Naive thymus-derived CD4-positive, alpha-beta T cell (primary cell): ENCODE measurements at regions of chr3 and their contacts with region 1.

Region 1: DNA sequence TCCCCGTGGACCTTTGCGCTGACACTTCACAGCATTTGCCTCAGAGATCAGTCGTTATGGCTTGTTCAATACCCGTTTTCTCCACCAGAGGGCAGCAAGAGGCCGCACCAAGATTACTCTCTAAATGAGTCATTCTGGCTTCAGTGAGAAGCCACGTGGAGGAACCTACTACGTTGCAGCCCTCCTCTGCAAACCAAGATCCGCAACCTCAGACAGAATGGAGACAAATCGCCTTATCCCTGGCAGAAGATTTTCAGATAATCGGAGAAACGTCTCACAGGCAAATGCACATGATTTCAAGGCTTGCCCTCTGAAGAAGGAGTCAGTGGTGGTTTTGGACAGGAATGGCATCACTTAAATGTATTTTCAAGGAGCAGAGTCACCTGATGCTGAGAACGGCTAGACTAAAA is 60.5 kb downstream of the GTPBP8 start:
- DNase-seq: peak; percentile 65 to 86 (median 77)
- ATAC-seq: peak; percentile 99
- H3K4me3 ChIP-seq: no peak overlapping the region
- H3K4me3 Mint-ChIP-seq: no peak overlapping the region
- H3K27ac ChIP-seq: no peak overlapping the region
- H3K27ac Mint-ChIP-seq: no peak overlapping the region
- H3K4me1 ChIP-seq: peaks cover 0 to 4% of the 10 kb centered on the region in 2 donors
- H3K4me1 Mint-ChIP-seq: peaks cover 0 to 18% (median 14%) of the 10 kb centered on the region in 7 donors
- H3K27me3 ChIP-seq: no peaks in the 10 kb centered on the region
- H3K27me3 Mint-ChIP-seq: no peaks in the 10 kb centered on the region

Region 2: DNA sequence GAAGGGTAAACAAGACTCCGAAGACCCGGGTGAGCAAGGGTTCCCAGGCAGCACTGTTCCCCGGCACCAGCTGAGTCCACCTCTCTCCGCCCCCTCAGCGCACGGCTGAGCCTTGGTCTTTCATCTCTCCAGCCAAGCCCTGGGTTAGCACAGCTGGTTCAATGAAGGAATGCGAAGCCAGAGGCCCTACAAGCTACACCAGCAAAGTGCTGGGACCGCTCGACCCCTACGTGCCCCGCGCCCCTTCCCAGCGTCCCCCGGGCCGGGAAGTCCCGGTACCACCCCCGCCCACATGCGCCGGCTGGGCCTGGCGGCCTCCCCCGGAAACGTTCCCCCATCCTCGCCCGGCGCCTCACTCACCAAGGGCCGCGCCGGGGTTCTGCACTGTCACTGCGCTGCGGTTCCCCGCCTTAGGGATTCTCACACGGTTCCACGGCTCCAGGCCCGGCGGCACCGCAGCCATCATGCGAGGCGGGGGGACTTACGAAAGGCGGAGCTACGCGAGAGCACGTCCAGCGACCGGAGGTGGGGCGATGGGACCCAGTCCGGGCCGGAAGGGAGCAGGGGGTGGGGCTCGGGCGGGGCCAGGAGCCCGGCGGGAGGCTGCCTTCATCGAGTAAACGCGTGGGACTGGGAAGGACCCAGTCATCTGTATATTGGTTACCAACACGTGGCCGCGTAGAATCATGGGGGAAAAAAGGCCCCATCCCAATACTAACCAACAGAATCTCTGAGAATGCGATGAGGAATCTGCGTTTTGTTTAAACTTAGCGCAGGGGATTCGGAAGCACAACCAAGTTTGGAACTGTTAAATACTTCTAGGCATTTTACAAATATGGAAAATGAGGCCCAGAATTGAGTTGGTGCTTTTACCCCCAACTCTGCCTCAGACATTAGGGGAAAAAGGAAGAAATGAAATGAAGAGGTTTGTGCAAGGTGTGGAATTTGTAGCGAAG is 31.8 kb before region 1 on chr3:
- CTCF ChIA-PET with region 1: no interaction called
- POLR2A ChIA-PET with region 1: no interaction called
- intact Hi-C with region 1: loop called in 1 of 2 experiments (anchors 1 kb)
- DNase-seq: peak; percentile 69 to 89 (median 74)
- ATAC-seq: peak; percentile 92
- H3K4me3 ChIP-seq: peak overlapping the region; percentile 81
- H3K4me3 Mint-ChIP-seq: peak overlapping the region; percentile 87 to 97 (median 92)
- H3K27ac ChIP-seq: peak overlapping the region; percentile 96
- H3K27ac Mint-ChIP-seq: peak overlapping the region; percentile 87 to 96 (median 91)
- H3K4me1 ChIP-seq: peaks cover 19 to 21% of the 10 kb centered on the region in 2 donors
- H3K4me1 Mint-ChIP-seq: peaks cover 44 to 87% (median 71%) of the 10 kb centered on the region in 7 donors
- H3K27me3 ChIP-seq: no peaks in the 10 kb centered on the region
- H3K27me3 Mint-ChIP-seq: no peaks in the 10 kb centered on the region

Region 3: GRCh38 chr3:113211330-113212149 is 160.2 kb after region 1 on chr3 and contains the start of gene BOC:
- CTCF ChIA-PET with region 1: no interaction called
- POLR2A ChIA-PET with region 1: no interaction called
- intact Hi-C with region 1: loop called in 1 of 2 experiments (anchors 5 kb)
- DNase-seq: peak in 1 of 9 donors; percentile 32
- ATAC-seq: no peak
- H3K4me3 ChIP-seq: no peak within 1 kb of the TSS
- H3K4me3 Mint-ChIP-seq: peak within 1 kb of the TSS; percentile 35 to 83 (median 70)
- H3K27ac ChIP-seq: no peak within 1 kb of the TSS
- H3K27ac Mint-ChIP-seq: peak within 1 kb of the TSS in 1 of 9 donors; percentile 16
- H3K4me1 ChIP-seq: no peaks in the 10 kb centered on the region
- H3K4me1 Mint-ChIP-seq: peaks cover 6 to 19% (median 13%) of the 10 kb centered on the region in 7 donors
- H3K27me3 ChIP-seq: peaks cover 0 to 4% of the 10 kb centered on the region in 2 donors
- H3K27me3 Mint-ChIP-seq: peaks cover 71 to 89% (median 74%) of the 10 kb centered on the region in 5 donors
- total RNA-seq, gene BOC: 0.98 TPM in 1 of 5 experiments, not detected in the others

Region 4: DNA sequence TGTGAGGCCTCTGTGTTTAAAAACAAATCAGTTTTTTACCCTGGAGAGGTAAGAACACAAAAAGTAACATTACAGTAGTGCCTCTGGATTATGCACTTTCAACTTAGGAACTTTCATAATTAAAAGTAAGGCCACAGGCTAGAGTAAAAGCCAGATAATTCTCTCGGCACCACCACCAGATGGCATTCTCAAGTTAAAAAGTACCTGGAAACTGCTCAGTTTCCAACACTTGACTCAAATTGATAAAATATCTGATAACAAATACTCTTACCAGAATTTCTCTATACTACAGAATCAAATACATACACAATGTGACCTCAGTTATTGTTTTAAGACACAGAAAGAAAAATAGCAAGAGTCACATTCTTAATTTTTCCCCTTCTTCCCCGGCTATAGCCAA is 443.7 kb after region 1 on chr3:
- CTCF ChIA-PET with region 1: no interaction called
- POLR2A ChIA-PET with region 1: no interaction called
- intact Hi-C with region 1: loop called (anchors 1 to 10 kb)
- DNase-seq: peak in 6 of 9 donors; percentile 22 to 62 (median 42)
- ATAC-seq: peak; percentile 67
- H3K4me3 ChIP-seq: no peak overlapping the region
- H3K4me3 Mint-ChIP-seq: no peak overlapping the region
- H3K27ac ChIP-seq: no peak overlapping the region
- H3K27ac Mint-ChIP-seq: no peak overlapping the region
- H3K4me1 ChIP-seq: no peaks in the 10 kb centered on the region
- H3K4me1 Mint-ChIP-seq: peaks cover 0 to 10% (median under 1%) of the 10 kb centered on the region in 7 donors
- H3K27me3 ChIP-seq: no peaks in the 10 kb centered on the region
- H3K27me3 Mint-ChIP-seq: no peaks in the 10 kb centered on the region

Region 5: DNA sequence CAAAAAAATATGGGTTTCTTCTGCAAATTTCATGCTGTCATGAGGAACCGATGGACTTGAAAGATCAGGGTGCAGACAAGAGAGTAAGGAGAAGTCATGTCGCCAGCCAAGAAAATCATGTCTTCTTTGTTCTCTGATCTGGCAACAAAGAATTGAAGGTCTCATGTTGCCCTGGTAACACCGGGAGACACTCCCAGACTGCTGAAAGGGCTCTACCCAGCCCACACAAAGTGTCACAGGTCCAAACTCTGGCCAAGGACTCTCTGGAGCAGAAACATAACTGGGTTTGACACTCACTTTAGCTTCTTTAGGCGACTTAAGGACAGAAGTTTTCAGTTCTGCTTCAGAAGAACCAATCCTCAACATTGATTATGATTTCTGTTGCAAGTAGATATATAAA is 523.9 kb after region 1 on chr3:
- CTCF ChIA-PET with region 1: no interaction called
- POLR2A ChIA-PET with region 1: no interaction called
- intact Hi-C with region 1: loop called (anchors 1 kb)
- DNase-seq: no peak
- ATAC-seq: no peak
- H3K4me3 ChIP-seq: no peak overlapping the region
- H3K4me3 Mint-ChIP-seq: no peak overlapping the region
- H3K27ac ChIP-seq: no peak overlapping the region
- H3K27ac Mint-ChIP-seq: peak overlapping the region in 8 of 9 donors; percentile 10 to 79 (median 66)
- H3K4me1 ChIP-seq: no peaks in the 10 kb centered on the region
- H3K4me1 Mint-ChIP-seq: peaks cover 3 to 21% (median 13%) of the 10 kb centered on the region in 7 donors
- H3K27me3 ChIP-seq: no peaks in the 10 kb centered on the region
- H3K27me3 Mint-ChIP-seq: no peaks in the 10 kb centered on the region